ENCODE measurements at regions of chr2 and their contacts with region 1.

Region 1: GRCh38 chr2:38508311-38509039 is 94.3 kb downstream of the HNRNPLL start:
- DNase-seq: peak; percentile 86
- H3K4me3 Mint-ChIP-seq: no peak overlapping the region
- H3K27ac Mint-ChIP-seq: no peak overlapping the region
- H3K4me1 Mint-ChIP-seq: peaks cover 21% of the 10 kb centered on the region
- H3K27me3 Mint-ChIP-seq: no peaks in the 10 kb centered on the region
- CTCF ChIP-seq: peak; percentile 46

Region 2: DNA sequence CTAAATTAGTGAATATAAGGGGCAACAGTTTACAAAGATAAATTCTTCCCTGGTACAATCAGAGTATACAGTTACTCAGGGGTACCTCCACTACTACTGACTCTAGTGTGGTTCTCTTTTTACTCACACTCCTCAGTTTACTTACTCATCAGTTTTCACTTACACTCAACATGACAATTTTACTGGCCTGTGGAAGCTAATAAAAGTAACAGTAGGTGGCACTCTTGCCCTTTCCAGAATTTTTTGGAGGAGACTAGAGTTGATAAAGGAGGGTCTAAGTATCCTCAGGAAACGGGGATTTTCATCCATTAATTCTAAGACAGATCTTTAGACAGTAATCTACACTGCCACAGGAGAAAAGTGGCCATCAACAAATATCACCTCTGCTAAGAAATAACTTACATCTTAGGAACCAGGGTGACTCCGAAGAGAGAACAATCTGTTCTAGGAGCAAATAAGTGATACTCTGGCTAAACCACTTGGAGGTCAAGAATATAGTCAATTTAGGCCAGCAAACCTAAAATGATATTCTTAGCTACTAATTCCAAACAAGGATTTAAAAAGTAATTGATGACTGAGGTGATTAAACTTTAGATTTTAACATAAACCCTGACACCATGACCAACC is 192.7 kb before region 1 on chr2:
- CTCF ChIA-PET with region 1: interaction called, 12 read pairs
- intact Hi-C with region 1: loop called (anchors 1 kb)
- DNase-seq: peak; percentile 47
- H3K4me3 Mint-ChIP-seq: no peak overlapping the region
- H3K27ac Mint-ChIP-seq: no peak overlapping the region
- H3K4me1 Mint-ChIP-seq: no peaks in the 10 kb centered on the region
- H3K27me3 Mint-ChIP-seq: no peaks in the 10 kb centered on the region
- CTCF ChIP-seq: peak; percentile 41